ENCODE measurements at regions of chr1 and their contacts with region 1.

Region 1: GRCh38 chr1:81867235-81867634 is 66.5 kb downstream of the ADGRL2 start:
- DNase-seq: no peak
- ATAC-seq: no peak

Region 2: GRCh38 chr1:83818916-83819315 is 1951.7 kb after region 1 on chr1:
- intact Hi-C with region 1: loop called (anchors 10 kb)
- DNase-seq: no peak
- ATAC-seq: no peak